ENCODE measurements at regions of chr15 and their contacts with region 1.

Region 1: DNA sequence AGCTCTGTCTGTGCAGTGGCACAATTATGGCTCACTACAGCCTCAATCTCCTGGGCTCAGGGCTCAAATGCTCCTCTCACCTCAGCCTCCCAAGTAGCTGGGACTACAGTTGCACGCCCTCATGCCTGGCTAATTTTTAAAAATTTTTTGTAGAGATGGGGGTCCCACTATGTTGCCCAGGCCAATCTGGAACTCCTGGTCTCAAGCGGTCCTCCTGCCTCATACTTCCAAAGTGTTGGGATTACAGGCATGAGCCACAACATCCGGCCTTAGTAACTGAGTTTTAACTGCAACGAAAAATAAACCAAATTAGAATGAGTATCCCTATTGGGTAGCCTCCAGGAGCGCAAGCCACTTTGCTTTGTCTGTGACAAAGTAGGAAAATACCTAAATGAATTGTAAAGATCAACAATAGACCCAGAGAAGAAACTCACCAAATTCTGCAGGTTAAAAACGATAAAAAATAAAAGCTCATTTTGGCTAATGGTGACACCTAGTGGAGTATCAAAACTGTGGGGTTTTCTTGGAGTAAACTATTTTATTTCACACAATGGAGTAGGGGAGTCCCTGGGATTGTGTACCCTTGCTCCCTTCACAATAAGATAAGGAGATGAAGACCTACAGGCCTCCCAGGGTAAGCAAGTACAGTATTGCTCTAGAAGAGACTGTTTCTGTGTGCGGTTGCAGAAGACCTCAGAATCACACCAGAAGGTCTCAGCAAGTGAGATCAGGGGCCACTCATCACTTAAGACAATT is 21.0 kb upstream of the CA12 start:
- DNase-seq: no peak
- ATAC-seq: peak in 2 of 4 donors; percentile 57 to 60
- H3K4me3 ChIP-seq: no peak overlapping the region
- H3K27ac ChIP-seq: no peak overlapping the region
- H3K4me1 ChIP-seq: no peaks in the 10 kb centered on the region
- H3K27me3 ChIP-seq: no peaks in the 10 kb centered on the region
- CTCF ChIP-seq: peak; percentile 71

Region 2: GRCh38 chr15:63172376-63173109 is 230.1 kb before region 1 on chr15:
- intact Hi-C with region 1: loop called in 1 of 2 experiments (anchors 10 kb)
- DNase-seq: peak; percentile 40 to 87
- ATAC-seq: peak; percentile 63 to 91 (median 89)
- H3K4me3 ChIP-seq: no peak overlapping the region
- H3K27ac ChIP-seq: peak overlapping the region; percentile 60
- H3K4me1 ChIP-seq: peaks cover 23% of the 10 kb centered on the region
- H3K27me3 ChIP-seq: no peaks in the 10 kb centered on the region
- CTCF ChIP-seq: no peak

Region 3: DNA sequence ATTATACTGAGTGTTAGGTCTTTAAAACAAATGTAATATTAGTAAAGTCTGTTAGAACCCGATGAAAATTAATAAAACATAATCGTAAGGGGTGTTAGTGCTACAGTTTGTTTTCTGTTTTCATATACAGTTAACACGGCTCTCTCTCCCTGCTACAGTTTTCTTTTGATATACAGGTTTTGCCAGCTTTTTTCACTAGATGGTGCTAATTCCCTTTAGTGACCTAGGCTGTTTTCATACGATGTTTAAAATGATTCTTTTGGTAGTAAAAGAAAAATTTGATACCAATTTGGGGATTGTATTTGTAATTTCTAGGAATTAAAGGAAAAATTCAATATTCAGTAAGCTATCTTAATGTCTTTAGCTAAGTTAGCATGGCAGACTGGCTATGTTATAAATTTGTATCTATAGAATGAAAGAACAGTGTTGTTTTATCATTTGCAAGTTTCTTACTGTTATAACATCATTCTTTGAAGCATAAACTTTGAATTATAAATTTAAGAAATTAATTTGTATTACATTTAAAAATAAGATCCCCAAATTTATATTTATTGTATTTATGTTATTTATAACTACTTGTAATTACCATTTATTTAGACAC is 113.8 kb before region 1 on chr15:
- intact Hi-C with region 1: loop called (anchors 1 to 2 kb)
- DNase-seq: no peak
- ATAC-seq: peak in 2 of 4 donors; percentile 66 to 80
- H3K4me3 ChIP-seq: no peak overlapping the region
- H3K27ac ChIP-seq: no peak overlapping the region
- H3K4me1 ChIP-seq: peaks cover 7% of the 10 kb centered on the region
- H3K27me3 ChIP-seq: no peaks in the 10 kb centered on the region
- CTCF ChIP-seq: peak; percentile 71